ENCODE measurements at regions of chr9 and their contacts with region 1.

Region 1: GRCh38 chr9:35611230-35611797 is 6.3 kb downstream of the TESK1 start:
- DNase-seq: peak; percentile 70
- H3K4me3 Mint-ChIP-seq: no peak overlapping the region
- H3K27ac Mint-ChIP-seq: no peak overlapping the region
- H3K4me1 Mint-ChIP-seq: peaks cover 25% of the 10 kb centered on the region
- H3K27me3 Mint-ChIP-seq: peaks cover 27% of the 10 kb centered on the region

Region 2: GRCh38 chr9:35628389-35628991 is 17.2 kb after region 1 on chr9:
- CTCF ChIA-PET with region 1: interaction called, 12 read pairs
- DNase-seq: no peak
- H3K4me3 Mint-ChIP-seq: no peak overlapping the region
- H3K27ac Mint-ChIP-seq: no peak overlapping the region
- H3K4me1 Mint-ChIP-seq: no peaks in the 10 kb centered on the region
- H3K27me3 Mint-ChIP-seq: peaks cover 4% of the 10 kb centered on the region

Region 3: GRCh38 chr9:35657546-35658136 is 46.3 kb after region 1 on chr9 and contains the start of gene RMRP:
- CTCF ChIA-PET with region 1: interaction called, 41 read pairs
- DNase-seq: peak; percentile 91
- H3K4me3 Mint-ChIP-seq: peak within 1 kb of the TSS; percentile 81
- H3K27ac Mint-ChIP-seq: peak within 1 kb of the TSS; percentile 96
- H3K4me1 Mint-ChIP-seq: peaks cover 69% of the 10 kb centered on the region
- H3K27me3 Mint-ChIP-seq: peaks cover 18% of the 10 kb centered on the region

Region 4: GRCh38 chr9:35664531-35665470 is 53.5 kb after region 1 on chr9 and contains the start of gene ARHGEF39:
- CTCF ChIA-PET with region 1: interaction called, 41 read pairs
- DNase-seq: peak; percentile 85
- H3K4me3 Mint-ChIP-seq: peak within 1 kb of the TSS; percentile 87
- H3K27ac Mint-ChIP-seq: peak within 1 kb of the TSS; percentile 84
- H3K4me1 Mint-ChIP-seq: peaks cover 65% of the 10 kb centered on the region
- H3K27me3 Mint-ChIP-seq: no peaks in the 10 kb centered on the region

Measured in activated naive CD4-positive, alpha-beta T cell treated with anti-CD3 and anti-CD28 coated beads, Interleukin-2, amount 10 ng/mL, durations not matched to agents 7 days and 5 days (primary cell).